ENCODE measurements at regions of chr10 and their contacts with region 1.

Region 1: GRCh38 chr10:111200505-111201186 is 123.8 kb downstream of the ADRA2A start:
- DNase-seq: peak; percentile 50 to 55
- H3K4me3 ChIP-seq: no peak overlapping the region
- H3K4me3 Mint-ChIP-seq: peak overlapping the region; percentile 20
- H3K27ac Mint-ChIP-seq: no peak overlapping the region
- H3K4me1 ChIP-seq: no peaks in the 10 kb centered on the region
- H3K4me1 Mint-ChIP-seq: peaks cover 6% of the 10 kb centered on the region
- H3K27me3 ChIP-seq: no peaks in the 10 kb centered on the region
- H3K27me3 Mint-ChIP-seq: no peaks in the 10 kb centered on the region
- CTCF ChIP-seq: no peak

Region 2: DNA sequence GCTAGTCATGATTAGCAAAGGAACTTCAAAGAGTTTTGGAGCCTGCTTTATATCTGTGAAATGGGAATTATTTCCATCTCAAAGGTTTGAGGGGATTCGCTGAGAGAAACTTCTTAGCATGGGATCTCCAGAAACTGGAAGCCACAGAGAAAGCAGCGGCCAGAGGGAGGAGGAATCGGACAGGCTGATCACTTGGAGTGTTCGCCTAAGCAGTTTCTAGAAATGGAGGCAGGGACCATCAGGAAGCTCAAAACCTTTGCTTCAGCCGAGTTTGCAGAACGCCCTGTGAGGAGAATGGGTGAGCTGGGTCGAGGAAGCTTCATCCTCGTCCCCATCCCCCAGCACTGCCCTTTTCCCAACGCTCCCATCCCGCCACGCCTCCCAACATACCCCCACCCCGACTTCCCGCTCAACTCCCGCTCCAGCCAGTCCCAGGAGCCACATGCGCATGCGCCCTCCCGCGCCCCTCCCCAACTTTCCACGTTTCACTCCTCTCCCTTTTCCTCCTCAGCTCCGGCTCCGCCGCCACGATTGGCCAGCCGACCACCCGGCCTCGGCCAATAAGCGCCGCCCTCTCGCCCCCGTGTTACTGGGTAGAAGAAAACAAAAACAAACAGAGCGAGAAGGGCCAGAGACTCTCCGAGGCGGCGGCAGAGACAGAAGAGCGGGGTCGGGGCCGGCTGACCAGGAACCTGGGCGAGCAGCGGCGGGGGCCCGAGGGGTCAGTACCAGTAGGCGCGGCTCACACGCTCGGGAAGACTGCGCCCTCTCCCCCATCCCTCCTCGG is 329.2 kb before region 1 on chr10 and contains the start of gene PDCD4:
- CTCF ChIA-PET with region 1: no interaction called
- POLR2A ChIA-PET with region 1: no interaction called
- intact Hi-C with region 1: no loop called
- DNase-seq: peak; percentile 99 to 100
- H3K4me3 ChIP-seq: peak within 1 kb of the TSS; percentile 72
- H3K4me3 Mint-ChIP-seq: peak within 1 kb of the TSS; percentile 85
- H3K27ac Mint-ChIP-seq: peak within 1 kb of the TSS; percentile 93
- H3K4me1 ChIP-seq: peaks cover 10% of the 10 kb centered on the region; the same call in 1 of the 2 replicates
- H3K4me1 Mint-ChIP-seq: peaks cover 12% of the 10 kb centered on the region
- H3K27me3 ChIP-seq: no peaks in the 10 kb centered on the region
- H3K27me3 Mint-ChIP-seq: no peaks in the 10 kb centered on the region
- CTCF ChIP-seq: no peak
- total RNA-seq, gene PDCD4: 65.5 and 66.1 TPM in 2 replicates

Region 3: DNA sequence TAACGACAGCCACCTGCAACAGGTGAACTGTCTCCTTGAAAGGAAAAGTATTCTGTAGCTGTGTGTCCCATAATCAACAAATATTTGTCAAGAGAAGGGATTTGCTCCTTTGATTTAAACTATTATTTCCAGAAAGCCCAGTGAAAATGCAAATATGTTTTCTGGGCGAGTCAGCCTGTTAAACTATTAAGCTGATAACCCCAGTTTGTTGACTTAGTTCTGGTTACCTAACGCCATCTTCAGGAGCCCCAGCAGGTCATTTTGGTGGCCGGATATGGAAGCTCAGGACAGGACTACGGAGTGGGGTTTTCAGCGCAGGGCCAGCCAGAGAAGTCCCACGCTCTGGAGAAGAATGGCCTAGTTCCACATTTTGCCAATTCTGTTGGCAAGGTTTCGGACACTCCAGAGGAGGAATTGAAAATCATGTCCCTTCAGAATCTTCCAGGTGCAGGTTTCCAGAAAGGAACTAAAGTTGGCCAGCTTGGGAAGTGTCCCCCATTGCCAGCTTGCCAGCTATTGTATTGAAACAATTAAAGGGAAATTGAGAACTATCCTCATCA is 69.3 kb before region 1 on chr10:
- CTCF ChIA-PET with region 1: no interaction called
- POLR2A ChIA-PET with region 1: no interaction called
- intact Hi-C with region 1: loop called (anchors 1 kb)
- DNase-seq: peak in 1 of 2 experiments; percentile 37
- H3K4me3 ChIP-seq: no peak overlapping the region
- H3K4me3 Mint-ChIP-seq: no peak overlapping the region
- H3K27ac Mint-ChIP-seq: no peak overlapping the region
- H3K4me1 ChIP-seq: no peaks in the 10 kb centered on the region
- H3K4me1 Mint-ChIP-seq: peaks cover 12% of the 10 kb centered on the region
- H3K27me3 ChIP-seq: no peaks in the 10 kb centered on the region; the same call in 1 of the 2 replicates
- H3K27me3 Mint-ChIP-seq: peaks cover 20% of the 10 kb centered on the region
- CTCF ChIP-seq: no peak